HepG2 (cell line): ENCODE measurements at regions of chr17 and their contacts with region 1.

Region 1: DNA sequence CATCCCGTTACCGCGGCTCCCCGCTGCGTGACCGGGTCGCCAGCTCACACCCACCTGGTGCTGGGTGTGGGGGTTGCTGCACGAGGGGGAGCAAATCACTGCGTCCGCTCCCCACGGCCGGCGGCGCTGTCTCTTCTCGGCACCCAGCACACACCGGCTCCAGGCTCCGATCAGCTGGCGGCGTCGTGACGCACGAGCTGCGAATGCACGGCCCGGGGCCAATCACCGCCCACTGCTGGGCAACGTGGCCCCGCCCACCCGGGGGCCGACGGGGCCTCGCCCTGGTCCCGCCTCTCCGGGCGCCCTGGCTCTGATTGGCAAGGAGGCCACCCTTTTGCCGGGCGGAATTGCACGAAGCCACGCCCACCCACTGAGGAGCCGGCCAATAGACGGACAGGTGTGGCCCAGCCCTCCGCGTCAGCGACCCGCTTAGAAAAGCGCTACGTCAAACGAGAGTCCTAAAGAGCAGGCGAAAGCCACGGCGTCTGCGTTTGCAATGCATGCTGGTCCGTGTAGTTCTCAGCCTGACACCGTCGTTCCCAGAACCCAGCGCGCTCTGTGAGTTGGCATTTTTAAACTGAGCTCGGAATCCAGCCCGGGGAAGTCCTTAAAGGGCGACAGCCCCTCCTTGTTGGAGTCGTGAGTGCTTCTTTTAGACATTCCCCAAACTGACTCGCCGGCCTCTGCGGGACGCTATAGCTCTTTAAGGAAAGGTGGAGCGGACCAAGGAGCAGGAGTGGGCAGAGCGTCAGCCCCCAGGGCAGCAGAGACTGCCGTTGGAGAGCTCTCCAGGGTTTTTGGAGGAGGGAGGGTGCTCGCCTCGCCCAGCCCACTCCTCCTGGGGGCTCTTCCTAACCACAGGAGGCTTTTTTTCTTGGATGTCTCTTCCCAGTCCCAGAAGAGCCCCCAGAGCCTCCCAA is 6.2 kb upstream of the TLCD2 start:
- DNase-seq: peak; percentile 99
- ATAC-seq: peak; percentile 70
- H3K4me3 ChIP-seq: peak overlapping the region; percentile 86 to 97 (median 90)
- H3K27ac ChIP-seq: peak overlapping the region; percentile 100
- H3K4me1 ChIP-seq: peaks cover 51% of the 10 kb centered on the region
- H3K27me3 ChIP-seq: no peaks in the 10 kb centered on the region; a peak in 1 of 5 replicates
- CTCF ChIP-seq: peak; percentile 38
- EP300 ChIP-seq: 0 out of 4 replicates have a peak, but pooled peaks of 1 of the 2 experiments have one; percentile 45
- POLR2A ChIP-seq: peak; percentile 94 to 95
- RAD21 ChIP-seq: peak; percentile 62

Region 2: DNA sequence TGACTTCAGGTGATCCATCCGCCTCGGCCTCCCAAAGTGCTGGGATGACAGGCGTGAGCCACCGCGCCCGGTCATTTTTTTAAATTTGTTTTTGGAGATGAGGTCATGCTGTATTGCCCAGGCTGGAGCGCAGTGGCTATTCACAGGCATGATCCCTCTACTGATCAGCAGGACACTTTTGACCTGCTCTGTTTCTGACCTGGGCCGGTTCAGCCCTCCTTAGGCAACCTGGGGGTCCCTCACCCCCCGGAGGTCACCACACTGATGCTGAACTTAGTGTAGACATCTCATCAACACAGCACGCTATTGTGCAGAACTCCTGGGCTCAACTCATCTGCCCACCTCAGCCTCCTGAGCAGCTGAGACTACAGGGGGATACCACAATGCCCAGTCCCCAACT is 112.1 kb before region 1 on chr17:
- CTCF ChIA-PET with region 1: no interaction called
- POLR2A ChIA-PET with region 1: no interaction called
- in situ Hi-C with region 1: no loop called
- intact Hi-C with region 1: no loop called
- DNase-seq: no peak
- ATAC-seq: no peak
- H3K4me3 ChIP-seq: no peak overlapping the region
- H3K27ac ChIP-seq: peak overlapping the region; percentile 52
- H3K4me1 ChIP-seq: peaks cover 79% of the 10 kb centered on the region
- H3K27me3 ChIP-seq: no peaks in the 10 kb centered on the region
- CTCF ChIP-seq: no peak
- EP300 ChIP-seq: no peak
- POLR2A ChIP-seq: no peak
- RAD21 ChIP-seq: no peak

Region 3: GRCh38 chr17:1673041-1673785 is 43.1 kb before region 1 on chr17:
- CTCF ChIA-PET with region 1: no interaction called
- POLR2A ChIA-PET with region 1: interaction called, 7 read pairs
- in situ Hi-C with region 1: no loop called
- intact Hi-C with region 1: loop called (anchors 1 kb)
- DNase-seq: no peak
- ATAC-seq: no peak
- H3K4me3 ChIP-seq: no peak overlapping the region
- H3K27ac ChIP-seq: no peak overlapping the region
- H3K4me1 ChIP-seq: no peaks in the 10 kb centered on the region
- H3K27me3 ChIP-seq: no peaks in the 10 kb centered on the region
- CTCF ChIP-seq: no peak
- EP300 ChIP-seq: no peak
- POLR2A ChIP-seq: 0 out of 4 replicates have a peak, but pooled peaks of 1 of the 2 experiments have one; percentile 12
- RAD21 ChIP-seq: no peak

Region 4: DNA sequence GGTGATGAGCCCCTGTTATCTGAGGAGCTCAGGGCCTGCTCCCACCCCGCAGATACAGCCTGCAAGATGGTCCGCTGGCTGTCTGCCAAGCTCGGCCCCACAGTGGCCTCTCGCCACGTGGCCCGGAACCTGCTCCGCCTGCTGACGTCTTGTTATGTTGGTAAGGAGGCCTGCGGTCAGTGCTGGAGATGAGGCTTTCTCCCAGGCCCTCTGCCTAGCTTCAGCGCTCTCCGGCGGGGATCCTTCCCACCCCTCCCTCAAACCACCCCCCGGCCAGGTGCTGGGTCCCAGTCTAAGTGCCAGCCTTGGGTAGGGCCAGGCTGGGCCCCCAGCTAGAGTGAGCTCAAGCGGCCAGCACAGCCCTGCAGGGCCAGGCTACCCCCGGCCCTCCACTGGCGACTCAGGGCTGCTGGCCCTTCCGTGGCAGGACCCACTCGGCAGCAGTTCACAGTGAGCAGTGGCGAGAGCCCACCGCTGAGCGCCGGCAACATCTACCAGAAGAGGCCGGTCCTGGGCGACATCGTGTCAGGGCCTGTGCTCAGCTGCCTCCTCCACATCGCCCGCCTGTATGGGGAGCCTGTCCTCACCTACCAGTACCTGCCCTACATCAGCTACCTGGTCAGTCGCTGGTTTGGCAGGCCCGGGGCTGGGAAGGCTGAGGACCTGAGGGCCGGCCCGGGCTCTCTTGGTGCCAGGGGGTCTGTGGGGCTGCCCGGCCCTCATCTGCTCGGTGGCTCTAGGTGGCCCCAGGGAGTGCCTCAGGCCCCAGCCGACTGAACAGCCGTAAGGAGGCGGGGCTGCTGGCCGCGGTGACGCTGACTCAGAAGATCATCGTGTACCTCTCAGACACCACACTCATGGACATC is 14.2 kb after region 1 on chr17:
- CTCF ChIA-PET with region 1: no interaction called
- POLR2A ChIA-PET with region 1: interaction called, 184 read pairs
- in situ Hi-C with region 1: no loop called
- intact Hi-C with region 1: no loop called
- DNase-seq: no peak
- ATAC-seq: peak; percentile 6; the same call in 2 of the 3 replicates
- H3K4me3 ChIP-seq: no peak overlapping the region
- H3K27ac ChIP-seq: no peak overlapping the region
- H3K4me1 ChIP-seq: peaks cover 49% of the 10 kb centered on the region
- H3K27me3 ChIP-seq: no peaks in the 10 kb centered on the region
- CTCF ChIP-seq: no peak
- EP300 ChIP-seq: no peak
- POLR2A ChIP-seq: no peak
- RAD21 ChIP-seq: no peak

Region 5: DNA sequence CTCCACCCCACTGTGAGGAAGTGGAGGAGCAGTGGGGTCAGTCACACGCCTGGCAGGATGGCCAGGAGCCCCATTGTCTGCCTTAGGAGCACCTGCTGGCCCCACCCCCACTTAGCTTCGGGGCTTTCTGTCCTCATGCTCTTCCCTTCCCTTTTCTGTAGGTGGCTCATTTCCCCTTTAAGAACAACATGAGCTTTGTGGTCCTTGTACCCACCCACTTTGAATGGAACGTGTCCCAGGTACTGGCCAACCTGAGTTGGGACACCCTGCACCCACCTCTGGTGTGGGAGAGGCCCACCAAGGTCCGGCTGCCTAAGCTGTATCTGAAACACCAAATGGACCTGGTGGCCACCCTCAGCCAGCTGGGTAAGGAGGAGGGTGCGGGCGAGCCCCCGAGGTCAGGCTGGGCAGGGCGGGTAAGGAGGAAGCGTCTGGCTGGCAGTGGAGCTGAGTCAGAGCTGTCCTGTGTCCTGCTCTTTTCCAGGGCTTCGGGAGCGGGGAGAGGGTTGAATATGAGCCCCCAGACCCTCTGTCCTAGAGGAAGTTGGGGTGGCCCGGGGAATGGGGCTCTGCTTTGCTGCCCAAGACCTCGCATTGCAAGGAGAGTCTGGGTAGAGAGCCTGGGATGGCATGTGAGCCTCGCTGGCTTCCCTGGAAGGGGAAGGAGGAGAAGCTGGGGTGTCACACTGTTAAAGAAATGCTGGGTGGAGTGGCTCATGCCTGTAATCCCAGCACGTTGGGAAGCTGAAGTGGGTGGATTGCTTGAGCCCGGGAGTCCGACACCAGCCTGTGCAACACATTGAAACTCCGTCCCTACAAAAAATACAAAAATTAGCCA is 36.3 kb after region 1 on chr17:
- CTCF ChIA-PET with region 1: no interaction called
- POLR2A ChIA-PET with region 1: interaction called, 299 read pairs
- in situ Hi-C with region 1: no loop called
- intact Hi-C with region 1: no loop called
- DNase-seq: no peak
- ATAC-seq: no peak
- H3K4me3 ChIP-seq: no peak overlapping the region
- H3K27ac ChIP-seq: peak overlapping the region; percentile 19
- H3K4me1 ChIP-seq: peaks cover 60% of the 10 kb centered on the region
- H3K27me3 ChIP-seq: no peaks in the 10 kb centered on the region
- CTCF ChIP-seq: no peak
- EP300 ChIP-seq: no peak
- POLR2A ChIP-seq: peak in 1 of 2 experiments; percentile 45; a peak in 3 of 4 replicates
- RAD21 ChIP-seq: no peak

Region 6: GRCh38 chr17:1776328-1776727 is 60.0 kb after region 1 on chr17:
- CTCF ChIA-PET with region 1: no interaction called
- POLR2A ChIA-PET with region 1: interaction called, 480 read pairs
- in situ Hi-C with region 1: no loop called
- intact Hi-C with region 1: no loop called
- DNase-seq: no peak
- ATAC-seq: no peak
- H3K4me3 ChIP-seq: no peak overlapping the region
- H3K27ac ChIP-seq: no peak overlapping the region
- H3K4me1 ChIP-seq: no peaks in the 10 kb centered on the region
- H3K27me3 ChIP-seq: no peaks in the 10 kb centered on the region
- CTCF ChIP-seq: no peak
- EP300 ChIP-seq: no peak
- POLR2A ChIP-seq: peak in 1 of 2 experiments; percentile 23; a peak in 2 of 4 replicates
- RAD21 ChIP-seq: no peak

Region 7: GRCh38 chr17:1829592-1830257 is 113.4 kb after region 1 on chr17 and contains the starts of genes RPA1 and SMYD4:
- CTCF ChIA-PET with region 1: no interaction called
- POLR2A ChIA-PET with region 1: interaction called, 31 read pairs
- in situ Hi-C with region 1: no loop called
- intact Hi-C with region 1: no loop called
- DNase-seq: peak; percentile 75
- ATAC-seq: peak; percentile 100
- H3K4me3 ChIP-seq: peak within 1 kb of the TSS; percentile 66 to 88 (median 84)
- H3K27ac ChIP-seq: peak within 1 kb of the TSS; percentile 73
- H3K4me1 ChIP-seq: peaks cover 29% of the 10 kb centered on the region
- H3K27me3 ChIP-seq: no peaks in the 10 kb centered on the region; a peak in 1 of 5 replicates
- CTCF ChIP-seq: peak; percentile 7; the same call in 1 of the 2 replicates
- EP300 ChIP-seq: no peak; a peak in 1 of 4 replicates
- POLR2A ChIP-seq: peak; percentile 74 to 93
- RAD21 ChIP-seq: peak; percentile 20; the same call in 1 of the 2 replicates
- total RNA-seq, gene RPA1: 13.9 and 53.3 TPM in 2 replicates
- total RNA-seq, gene SMYD4: 9.8 and 11.3 TPM in 2 replicates

Region 8: DNA sequence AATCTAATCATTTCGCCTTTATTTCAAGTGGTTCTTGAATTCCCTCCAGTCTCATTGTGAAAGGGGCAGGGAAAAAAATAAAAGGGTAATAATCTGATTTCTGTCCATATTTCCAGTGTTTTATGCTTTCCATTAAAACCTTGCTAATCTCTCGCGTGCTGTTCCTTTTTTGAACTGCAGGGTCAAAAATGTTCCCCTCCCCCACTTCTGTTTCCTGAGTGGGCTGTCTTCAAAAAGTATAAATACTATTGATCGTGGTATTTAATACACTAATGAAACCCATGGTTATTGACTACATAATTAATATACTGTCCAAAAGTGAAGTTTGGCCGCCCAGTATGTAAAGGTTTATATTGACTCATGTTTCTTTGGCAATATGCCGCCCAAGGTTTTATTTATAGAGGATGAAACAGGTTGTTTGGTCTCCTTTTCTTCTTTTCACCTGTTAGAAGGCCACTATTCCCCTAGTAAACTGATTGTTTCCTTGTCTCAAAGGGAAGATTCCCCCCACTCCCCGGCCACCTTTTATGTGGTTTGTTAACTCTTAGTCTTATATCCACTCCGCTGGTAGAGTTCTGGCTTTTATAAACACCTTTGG is 183.2 kb after region 1 on chr17:
- CTCF ChIA-PET with region 1: no interaction called
- POLR2A ChIA-PET with region 1: no interaction called
- in situ Hi-C with region 1: no loop called
- intact Hi-C with region 1: no loop called
- DNase-seq: no peak
- ATAC-seq: no peak
- H3K4me3 ChIP-seq: no peak overlapping the region
- H3K27ac ChIP-seq: no peak overlapping the region
- H3K4me1 ChIP-seq: peaks cover 26% of the 10 kb centered on the region
- H3K27me3 ChIP-seq: no peaks in the 10 kb centered on the region
- CTCF ChIP-seq: no peak
- EP300 ChIP-seq: no peak
- POLR2A ChIP-seq: no peak
- RAD21 ChIP-seq: no peak